CD4-positive, alpha-beta T cell (primary cell): ENCODE measurements at regions of chr14 and their contacts with region 1.

Region 1: GRCh38 chr14:49306152-49306751 is 279.9 kb downstream of the RPS29 start:
- DNase-seq: peak in 1 of 14 experiments; percentile 0
- ATAC-seq: no peak
- H3K4me3 ChIP-seq: no peak overlapping the region
- H3K4me3 Mint-ChIP-seq: no peak overlapping the region
- H3K27ac ChIP-seq: no peak overlapping the region
- H3K27ac Mint-ChIP-seq: no peak overlapping the region
- H3K4me1 ChIP-seq: no peaks in the 10 kb centered on the region
- H3K4me1 Mint-ChIP-seq: no peaks in the 10 kb centered on the region
- H3K27me3 ChIP-seq: peaks cover 0 to 4% of the 10 kb centered on the region in 2 experiments
- H3K27me3 Mint-ChIP-seq: peaks cover 5% of the 10 kb centered on the region
- CTCF ChIP-seq: peak; percentile 43

Region 2: GRCh38 chr14:50906326-50907065 is 1600.2 kb after region 1 on chr14:
- CTCF ChIA-PET with region 1: no interaction called
- POLR2A ChIA-PET with region 1: no interaction called
- intact Hi-C with region 1: loop called in 1 of 2 experiments (anchors 10 kb)
- DNase-seq: no peak
- ATAC-seq: no peak
- H3K4me3 ChIP-seq: no peak overlapping the region
- H3K4me3 Mint-ChIP-seq: no peak overlapping the region
- H3K27ac ChIP-seq: no peak overlapping the region
- H3K27ac Mint-ChIP-seq: no peak overlapping the region
- H3K4me1 ChIP-seq: no peaks in the 10 kb centered on the region
- H3K4me1 Mint-ChIP-seq: no peaks in the 10 kb centered on the region
- H3K27me3 ChIP-seq: peaks cover 7 to 11% of the 10 kb centered on the region in 2 experiments
- H3K27me3 Mint-ChIP-seq: peaks cover 6% of the 10 kb centered on the region
- CTCF ChIP-seq: no peak